ENCODE measurements at regions of chr7 and their contacts with region 1.

Region 1: GRCh38 chr7:5494683-5495561 is 71.3 kb upstream of the TNRC18 start:
- DNase-seq: peak; percentile 72 to 88
- H3K4me3 ChIP-seq: no peak overlapping the region
- H3K4me1 ChIP-seq: no peaks in the 10 kb centered on the region
- H3K27me3 ChIP-seq: no peaks in the 10 kb centered on the region

Region 2: DNA sequence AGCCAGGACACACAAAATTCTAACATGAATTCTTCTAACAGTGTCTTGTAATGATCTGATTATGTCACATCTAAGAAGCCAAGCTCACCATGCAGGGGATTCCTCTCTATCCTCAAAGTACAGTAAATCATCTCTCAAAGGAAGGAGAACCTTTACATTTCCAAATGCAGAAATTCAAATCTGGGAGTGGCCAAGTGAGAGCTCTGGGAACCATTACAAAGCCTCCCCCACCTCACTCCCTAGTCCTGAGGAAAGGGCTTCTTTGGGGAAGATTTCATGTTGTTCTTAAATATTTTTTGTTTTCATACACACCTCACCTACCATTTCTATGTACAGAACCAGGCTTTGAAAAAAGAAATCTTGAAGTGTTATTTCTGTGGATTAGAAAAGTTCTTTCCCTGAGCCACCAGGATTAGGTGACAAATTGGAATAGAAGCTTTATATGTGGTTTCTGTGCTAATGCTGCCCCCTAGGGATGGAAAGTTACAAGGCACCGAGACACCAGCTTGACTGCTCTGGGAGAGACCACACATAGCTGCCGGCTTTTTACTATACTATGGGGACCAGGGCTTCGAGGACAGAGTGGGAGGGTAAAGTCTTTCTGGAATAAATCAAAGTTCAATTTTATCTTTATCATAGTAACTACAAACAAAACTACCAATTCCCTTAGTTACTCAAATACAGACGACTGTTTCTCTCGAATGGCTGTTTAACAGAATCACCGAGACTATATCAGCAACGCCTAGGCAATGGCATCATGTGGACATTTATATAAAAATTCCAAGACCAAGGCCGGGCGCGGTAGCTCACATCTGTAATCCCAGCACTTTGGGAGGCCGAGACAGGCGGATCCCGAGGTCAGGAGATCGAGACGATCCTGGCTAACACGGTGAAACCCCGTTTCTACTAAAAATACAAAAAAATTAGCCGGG is 170.4 kb after region 1 on chr7:
- in situ Hi-C with region 1: loop called (anchors 5 kb)
- DNase-seq: peak; percentile 70 to 84
- H3K4me3 ChIP-seq: no peak overlapping the region
- H3K4me1 ChIP-seq: peaks cover 5% of the 10 kb centered on the region; the same call in 1 of the 2 replicates
- H3K27me3 ChIP-seq: no peaks in the 10 kb centered on the region

Region 3: DNA sequence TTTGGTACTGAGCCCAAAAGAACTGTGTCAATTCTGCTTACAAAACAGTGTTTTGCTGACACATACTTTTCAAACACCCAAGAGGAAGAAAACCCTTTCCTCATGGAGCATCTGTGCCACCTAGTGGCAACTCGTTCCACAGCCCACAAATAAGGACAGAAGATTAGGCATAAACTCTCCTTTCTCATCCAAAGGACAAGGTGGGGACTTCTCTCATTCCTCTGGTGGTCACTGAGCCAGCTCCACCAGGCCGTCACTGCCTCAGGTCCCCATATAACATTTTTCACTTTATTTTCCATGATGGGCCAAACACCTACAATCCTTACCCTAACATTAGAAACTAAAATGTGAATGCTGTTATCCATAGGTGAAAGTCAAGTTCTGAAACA is 209.6 kb after region 1 on chr7:
- in situ Hi-C with region 1: loop called (anchors 10 kb)
- DNase-seq: peak; percentile 62 to 77
- H3K4me3 ChIP-seq: no peak overlapping the region
- H3K4me1 ChIP-seq: peaks cover 8% of the 10 kb centered on the region
- H3K27me3 ChIP-seq: no peaks in the 10 kb centered on the region